Endothelial cell of umbilical vein (primary cell): ENCODE measurements at regions of chr19 and their contacts with region 1.

Region 1: DNA sequence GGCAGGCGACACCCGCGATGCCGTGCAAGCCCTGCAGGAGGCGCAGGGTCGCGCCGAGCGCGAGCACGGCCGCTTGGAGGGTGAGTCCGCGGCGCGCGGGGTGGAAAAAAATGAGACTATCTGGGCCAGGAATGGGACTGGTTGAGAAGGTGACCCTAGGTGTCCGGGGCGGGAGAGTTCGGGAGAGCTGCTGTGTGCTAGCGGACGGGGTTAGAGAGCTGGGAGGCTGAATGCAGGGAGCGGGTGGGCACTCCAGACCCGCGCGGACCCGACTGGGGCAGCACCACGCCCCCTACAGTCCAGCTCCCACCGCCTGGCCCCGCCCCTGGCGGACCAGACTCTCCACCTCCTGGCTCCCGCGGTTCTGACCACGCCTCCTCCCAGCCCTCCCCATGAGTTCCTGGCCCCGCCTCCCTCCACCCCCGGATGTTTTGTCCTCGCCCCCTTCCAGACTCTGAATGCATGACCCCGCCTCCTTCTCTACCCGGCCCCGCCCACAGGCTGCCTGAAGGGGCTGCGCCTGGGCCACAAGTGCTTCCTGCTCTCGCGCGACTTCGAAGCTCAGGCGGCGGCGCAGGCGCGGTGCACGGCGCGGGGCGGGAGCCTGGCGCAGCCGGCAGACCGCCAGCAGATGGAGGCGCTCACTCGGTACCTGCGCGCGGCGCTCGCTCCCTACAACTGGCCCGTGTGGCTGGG is 1.5 kb downstream of the CLEC11A start:
- DNase-seq: peak; percentile 100
- H3K4me3 ChIP-seq: peak overlapping the region; percentile 40 to 84 (median 53)
- H3K27ac ChIP-seq: peak overlapping the region; percentile 32
- H3K4me1 ChIP-seq: peaks cover 22% of the 10 kb centered on the region
- H3K27me3 ChIP-seq: no peaks in the 10 kb centered on the region
- CTCF ChIP-seq: peak; percentile 79 to 90
- POLR2A ChIP-seq: peak; percentile 96

Region 2: GRCh38 chr19:50383852-50384684 is 340.6 kb before region 1 on chr19 and contains the start of gene POLD1:
- CTCF ChIA-PET with region 1: no interaction called
- POLR2A ChIA-PET with region 1: no interaction called
- dilution Hi-C with region 1: no loop called
- intact Hi-C with region 1: loop called (anchors 1 kb)
- DNase-seq: peak; percentile 99
- H3K4me3 ChIP-seq: peak within 1 kb of the TSS; percentile 71 to 94 (median 80)
- H3K27ac ChIP-seq: peak within 1 kb of the TSS; percentile 63
- H3K4me1 ChIP-seq: peaks cover 16% of the 10 kb centered on the region
- H3K27me3 ChIP-seq: no peaks in the 10 kb centered on the region
- CTCF ChIP-seq: no peak
- POLR2A ChIP-seq: peak; percentile 79
- total RNA-seq, gene POLD1: 63.9 and 73.8 TPM in 2 replicates

Region 3: DNA sequence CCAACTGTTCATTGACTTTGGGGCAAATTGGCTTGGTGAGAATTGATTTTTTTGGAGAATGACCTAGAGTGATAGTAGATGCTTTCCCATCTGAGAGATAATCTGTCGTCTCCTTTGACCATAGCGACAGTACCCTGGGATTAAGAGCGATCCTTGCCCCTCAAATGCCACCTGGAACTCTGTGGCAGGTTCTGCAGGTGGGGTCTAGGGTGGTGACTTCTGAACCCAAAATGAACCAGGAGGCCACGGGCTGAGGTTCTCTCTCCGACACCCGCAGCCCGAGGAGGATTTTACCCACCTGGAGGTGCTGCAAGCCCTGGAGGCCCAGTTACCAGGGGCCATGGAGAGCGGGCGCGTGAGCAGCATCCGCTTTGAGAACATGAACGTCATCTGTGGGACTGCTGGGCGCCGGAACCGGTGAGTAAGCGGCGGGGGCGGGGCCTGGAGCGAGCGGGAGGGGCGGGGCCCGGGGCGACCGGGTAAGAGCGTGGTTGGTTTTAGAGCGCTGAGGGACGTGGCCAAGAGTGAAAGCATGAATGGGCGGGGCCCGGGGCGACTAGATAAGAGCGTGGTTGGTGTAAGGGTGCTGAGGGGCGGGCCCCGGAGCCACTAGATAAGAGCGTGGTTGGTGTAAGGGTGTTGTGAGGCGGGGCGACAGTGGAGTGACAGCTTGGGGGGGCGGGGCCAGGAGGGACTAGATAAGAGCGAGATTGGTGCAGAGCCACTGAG is 66.8 kb before region 1 on chr19:
- CTCF ChIA-PET with region 1: no interaction called
- POLR2A ChIA-PET with region 1: no interaction called
- dilution Hi-C with region 1: no loop called
- intact Hi-C with region 1: loop called (anchors 1 kb)
- DNase-seq: peak; percentile 98
- H3K4me3 ChIP-seq: peak overlapping the region in 2 of 3 experiments; percentile 2 to 26
- H3K27ac ChIP-seq: peak overlapping the region; percentile 71
- H3K4me1 ChIP-seq: peaks cover 11% of the 10 kb centered on the region
- H3K27me3 ChIP-seq: peaks cover 0 to 2% of the 10 kb centered on the region in 2 experiments
- CTCF ChIP-seq: no peak
- POLR2A ChIP-seq: no peak

Region 4: GRCh38 chr19:50705422-50706019 is 19.1 kb before region 1 on chr19:
- CTCF ChIA-PET with region 1: interaction called, 20 read pairs
- POLR2A ChIA-PET with region 1: no interaction called
- dilution Hi-C with region 1: no loop called
- intact Hi-C with region 1: loop called (anchors 1 kb)
- DNase-seq: peak; percentile 62
- H3K4me3 ChIP-seq: no peak overlapping the region
- H3K27ac ChIP-seq: no peak overlapping the region
- H3K4me1 ChIP-seq: peaks cover 18% of the 10 kb centered on the region
- H3K27me3 ChIP-seq: no peaks in the 10 kb centered on the region
- CTCF ChIP-seq: peak; percentile 72 to 81
- POLR2A ChIP-seq: no peak

Region 5: DNA sequence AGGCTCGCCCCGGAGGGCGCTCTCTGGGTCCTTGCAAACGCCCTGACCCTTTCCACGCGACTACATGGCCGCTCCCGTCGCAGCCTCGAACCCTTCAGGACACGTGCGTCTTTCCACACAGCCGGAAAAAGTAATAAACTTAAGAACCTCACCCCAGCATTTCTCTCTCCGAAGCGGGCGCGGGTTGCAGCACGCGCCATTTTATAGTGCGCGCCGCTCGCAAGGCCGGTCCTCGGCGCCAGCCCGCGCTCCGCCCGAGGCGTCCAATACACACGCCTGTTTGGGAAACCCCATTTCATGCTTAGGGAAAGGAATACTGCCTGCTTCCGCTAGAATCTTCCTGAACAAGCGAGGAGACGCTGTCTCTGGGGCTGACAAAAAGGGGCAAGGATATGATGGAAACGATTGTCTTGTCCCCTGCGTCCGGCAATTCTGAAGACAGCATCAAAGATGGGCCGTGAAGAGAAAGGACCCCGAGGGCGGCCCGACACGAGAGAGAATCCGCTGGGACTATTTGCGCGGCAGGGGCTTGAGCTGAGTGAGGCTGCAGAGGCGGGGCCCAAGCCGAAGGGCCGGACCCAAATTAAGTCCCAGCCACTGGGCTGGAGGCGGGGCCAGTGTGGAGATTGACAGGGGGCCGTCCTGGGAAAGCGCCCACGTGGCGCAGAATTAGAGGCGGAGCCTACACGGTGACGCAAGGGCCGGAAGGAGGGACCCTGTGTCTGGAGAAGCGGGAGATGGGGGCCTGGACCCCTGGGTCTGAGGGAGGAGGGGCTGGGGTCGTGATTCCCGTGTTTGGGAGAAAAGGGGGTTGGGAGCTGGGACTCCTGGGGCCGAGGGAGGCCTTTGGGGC is 80.0 kb after region 1 on chr19:
- CTCF ChIA-PET with region 1: interaction called, 5 read pairs
- POLR2A ChIA-PET with region 1: interaction called, 5 read pairs
- dilution Hi-C with region 1: no loop called
- intact Hi-C with region 1: loop called (anchors 1 kb)
- DNase-seq: peak; percentile 98
- H3K4me3 ChIP-seq: peak overlapping the region; percentile 94 to 100 (median 97)
- H3K27ac ChIP-seq: peak overlapping the region; percentile 98
- H3K4me1 ChIP-seq: peaks cover 12% of the 10 kb centered on the region
- H3K27me3 ChIP-seq: no peaks in the 10 kb centered on the region
- CTCF ChIP-seq: no peak
- POLR2A ChIP-seq: peak; percentile 87